ENCODE measurements at regions of chr15 and their contacts with region 1.

Region 1: GRCh38 chr15:28885630-28886430 is at the start of gene APBA2:
- DNase-seq: peak; percentile 47 to 61 (median 59)
- H3K4me3 ChIP-seq: peak within 1 kb of the TSS in 1 of 2 donors; percentile 60
- H3K4me3 Mint-ChIP-seq: peak within 1 kb of the TSS; percentile 81 to 91 (median 86)
- H3K27ac ChIP-seq: no peak within 1 kb of the TSS
- H3K27ac Mint-ChIP-seq: peak within 1 kb of the TSS in 6 of 7 donors; percentile 23 to 87 (median 65)
- H3K4me1 ChIP-seq: peaks cover 50% of the 10 kb centered on the region
- H3K4me1 Mint-ChIP-seq: peaks cover 26 to 44% (median 34%) of the 10 kb centered on the region in 4 donors
- H3K27me3 ChIP-seq: no peaks in the 10 kb centered on the region
- H3K27me3 Mint-ChIP-seq: no peaks in the 10 kb centered on the region
- total RNA-seq, gene APBA2: 52.4 to 57.3 TPM

Region 2: GRCh38 chr15:28726102-28726501 is 159.7 kb before region 1 on chr15:
- CTCF ChIA-PET with region 1: no interaction called
- POLR2A ChIA-PET with region 1: no interaction called
- intact Hi-C with region 1: no loop called
- DNase-seq: no peak
- H3K4me3 ChIP-seq: no peak overlapping the region
- H3K4me3 Mint-ChIP-seq: no peak overlapping the region
- H3K27ac ChIP-seq: no peak overlapping the region
- H3K27ac Mint-ChIP-seq: no peak overlapping the region
- H3K4me1 ChIP-seq: no peaks in the 10 kb centered on the region
- H3K4me1 Mint-ChIP-seq: peaks cover 0 to 4% (median 1%) of the 10 kb centered on the region in 4 donors
- H3K27me3 ChIP-seq: no peaks in the 10 kb centered on the region
- H3K27me3 Mint-ChIP-seq: peaks cover 0 to 2% of the 10 kb centered on the region in 2 donors

Region 3: DNA sequence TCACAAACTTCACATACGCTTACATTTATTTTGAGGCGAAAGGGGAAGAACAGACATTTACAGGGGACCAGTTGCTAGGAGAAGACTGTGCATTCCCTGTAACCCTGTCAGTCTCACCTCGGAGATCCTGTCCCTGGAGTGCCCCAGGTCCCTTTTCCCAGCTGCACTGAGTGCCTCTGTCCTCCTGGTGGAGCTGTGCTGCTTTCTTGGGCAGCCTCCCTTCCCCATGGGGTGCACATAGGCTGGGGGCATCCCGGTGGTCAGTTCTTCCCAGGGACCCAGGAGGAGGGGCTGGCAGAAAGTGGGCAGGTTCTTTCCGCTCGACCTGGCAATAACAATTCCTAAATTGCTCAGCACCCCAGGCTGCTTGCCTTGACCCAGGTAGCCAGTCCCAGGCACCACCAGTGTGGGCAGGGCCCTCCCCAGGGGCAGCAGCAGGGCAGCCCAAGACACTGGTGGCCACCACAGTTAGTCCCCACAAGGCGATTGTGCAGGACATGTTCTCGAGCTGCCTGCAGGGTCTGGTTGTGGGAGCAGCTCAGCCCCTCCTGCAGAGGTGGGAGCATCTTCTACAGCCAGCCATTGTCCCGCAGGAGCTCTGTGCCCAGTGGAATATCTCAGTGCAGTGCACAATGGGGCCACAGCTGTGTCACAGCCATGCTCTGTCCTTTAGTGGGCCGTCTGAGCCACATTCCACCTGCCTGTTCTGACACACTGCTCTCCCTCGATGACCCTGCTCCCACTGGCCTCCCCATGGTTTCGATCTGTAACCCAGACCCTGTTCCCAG is 36.3 kb after region 1 on chr15:
- CTCF ChIA-PET with region 1: interaction called, 5 read pairs
- POLR2A ChIA-PET with region 1: interaction called, 13 read pairs
- intact Hi-C with region 1: loop called (anchors 5 kb)
- DNase-seq: no peak
- H3K4me3 ChIP-seq: no peak overlapping the region
- H3K4me3 Mint-ChIP-seq: peak overlapping the region in 2 of 8 donors; percentile 59 to 64
- H3K27ac ChIP-seq: no peak overlapping the region
- H3K27ac Mint-ChIP-seq: peak overlapping the region in 1 of 7 donors; percentile 86
- H3K4me1 ChIP-seq: peaks cover 35% of the 10 kb centered on the region
- H3K4me1 Mint-ChIP-seq: peaks cover 39 to 76% (median 47%) of the 10 kb centered on the region in 4 donors
- H3K27me3 ChIP-seq: no peaks in the 10 kb centered on the region
- H3K27me3 Mint-ChIP-seq: peaks cover 0 to 2% of the 10 kb centered on the region in 2 donors